ENCODE measurements at regions of chr3 and their contacts with region 1.

Region 1: DNA sequence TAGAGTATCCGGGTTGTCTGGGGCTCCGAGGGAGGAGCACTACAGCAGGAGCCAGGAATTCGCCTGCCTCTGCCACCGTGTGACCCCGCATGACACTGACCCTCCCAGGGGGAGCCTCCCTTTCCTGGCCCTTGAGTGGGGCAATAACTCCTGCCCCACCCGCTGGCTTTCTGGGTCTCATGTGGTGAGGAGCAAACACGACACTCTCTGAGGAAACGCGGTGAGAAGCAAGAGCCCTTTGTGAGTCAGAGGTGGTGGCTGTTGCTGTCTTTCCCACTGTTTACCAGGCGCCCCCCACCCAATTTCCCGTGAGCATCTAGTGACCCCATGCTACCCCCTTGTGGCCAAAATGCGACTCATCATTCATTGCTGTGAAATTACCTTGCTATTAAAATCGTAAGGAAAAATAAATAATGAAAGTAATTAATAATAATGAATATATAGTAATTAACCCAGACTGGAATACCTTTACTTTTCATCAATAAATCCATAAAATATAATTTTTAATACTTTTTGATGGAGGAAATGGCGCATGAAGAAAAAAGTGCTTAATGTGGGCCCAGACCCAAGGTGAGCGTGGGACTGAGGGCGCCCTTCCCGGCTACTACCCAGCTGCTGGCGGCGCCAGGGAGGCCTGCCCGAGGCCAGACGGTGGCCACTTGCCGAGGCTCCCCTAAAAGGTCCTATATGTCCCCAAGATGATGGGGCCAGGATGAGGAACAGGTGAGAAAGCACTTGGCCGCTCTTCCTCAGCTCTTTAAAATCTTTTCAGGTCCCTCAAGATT is 29.3 kb downstream of the CCNL1 start:
- DNase-seq: peak; percentile 44 to 73 (median 66)
- ATAC-seq: peak; percentile 45
- H3K4me3 ChIP-seq: no peak overlapping the region
- H3K27ac ChIP-seq: peak overlapping the region; percentile 48; the same call in 2 of the 3 replicates
- H3K4me1 ChIP-seq: peaks cover 29 to 67% of the 10 kb centered on the region in 2 experiments
- H3K27me3 ChIP-seq: no peaks in the 10 kb centered on the region
- CTCF ChIP-seq: peak; percentile 68 to 81 (median 81)
- EP300 ChIP-seq: no peak
- POLR2A ChIP-seq: no peak
- RAD21 ChIP-seq: peak; percentile 86 to 91

Region 2: DNA sequence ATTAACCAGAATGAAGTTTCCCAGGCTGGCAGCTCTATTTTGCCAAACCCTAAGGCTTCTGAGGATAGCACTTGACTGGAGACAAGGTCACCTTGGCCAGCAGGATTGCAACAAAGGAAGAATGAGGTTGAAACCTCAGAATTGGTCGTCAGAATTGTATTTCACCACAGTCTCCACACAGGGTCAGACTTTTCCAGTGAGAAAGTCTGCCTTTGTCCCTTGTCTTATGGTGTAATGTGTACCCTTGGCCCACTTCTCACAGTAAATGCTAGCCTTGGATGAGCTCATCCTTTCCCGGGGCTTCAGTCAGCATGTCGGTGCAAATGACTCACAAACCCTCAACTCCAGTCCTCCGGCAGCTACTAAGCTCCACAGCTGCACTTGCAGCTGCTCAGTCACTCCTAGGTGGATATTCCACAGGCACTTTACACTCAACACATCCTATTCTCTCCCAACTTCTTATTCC is 595.5 kb before region 1 on chr3:
- CTCF ChIA-PET with region 1: interaction called, 4 read pairs
- POLR2A ChIA-PET with region 1: no interaction called
- in situ Hi-C with region 1: loop called (anchors 25 kb)
- intact Hi-C with region 1: loop called (anchors 5 kb)
- DNase-seq: peak in 2 of 4 experiments; percentile 44 to 65
- ATAC-seq: peak; percentile 87
- H3K4me3 ChIP-seq: no peak overlapping the region
- H3K27ac ChIP-seq: no peak overlapping the region
- H3K4me1 ChIP-seq: no peaks in the 10 kb centered on the region; a peak in 1 of 5 replicates
- H3K27me3 ChIP-seq: no peaks in the 10 kb centered on the region
- CTCF ChIP-seq: peak; percentile 22 to 48 (median 42); a peak in 4 of 6 replicates
- EP300 ChIP-seq: no peak
- POLR2A ChIP-seq: no peak
- RAD21 ChIP-seq: peak; percentile 13 to 74; a peak in 2 of 4 replicates

Region 3: DNA sequence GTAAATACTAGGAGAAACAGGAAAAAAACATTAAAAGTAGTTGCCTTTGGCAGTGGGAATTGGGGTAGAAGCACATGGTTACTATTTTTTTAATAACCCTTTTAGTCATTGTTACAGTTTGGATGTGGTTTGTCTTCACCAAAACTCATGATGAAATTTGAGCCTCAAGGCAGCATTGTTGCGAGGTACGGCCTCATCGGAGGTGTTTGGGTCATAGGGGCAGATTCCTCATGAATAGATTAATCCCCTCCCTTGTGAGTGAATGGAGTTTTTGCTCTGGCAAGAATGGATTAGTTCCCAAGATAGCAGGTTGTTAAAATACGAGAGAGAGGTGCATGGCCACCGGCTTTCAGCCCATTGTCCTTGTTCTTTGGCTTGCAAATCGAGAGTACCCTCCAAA is 211.9 kb before region 1 on chr3:
- CTCF ChIA-PET with region 1: no interaction called
- POLR2A ChIA-PET with region 1: no interaction called
- in situ Hi-C with region 1: no loop called
- intact Hi-C with region 1: loop called (anchors 10 kb)
- DNase-seq: no peak
- ATAC-seq: no peak
- H3K4me3 ChIP-seq: no peak overlapping the region
- H3K27ac ChIP-seq: no peak overlapping the region
- H3K4me1 ChIP-seq: no peaks in the 10 kb centered on the region
- H3K27me3 ChIP-seq: no peaks in the 10 kb centered on the region
- CTCF ChIP-seq: no peak
- EP300 ChIP-seq: no peak
- POLR2A ChIP-seq: no peak
- RAD21 ChIP-seq: no peak

Region 4: GRCh38 chr3:156943430-156943829 is 187.2 kb before region 1 on chr3:
- CTCF ChIA-PET with region 1: no interaction called
- POLR2A ChIA-PET with region 1: no interaction called
- in situ Hi-C with region 1: no loop called
- intact Hi-C with region 1: no loop called
- DNase-seq: no peak
- ATAC-seq: no peak
- H3K4me3 ChIP-seq: no peak overlapping the region
- H3K27ac ChIP-seq: no peak overlapping the region
- H3K4me1 ChIP-seq: no peaks in the 10 kb centered on the region
- H3K27me3 ChIP-seq: no peaks in the 10 kb centered on the region
- CTCF ChIP-seq: no peak
- EP300 ChIP-seq: no peak
- POLR2A ChIP-seq: no peak
- RAD21 ChIP-seq: no peak

Region 5: DNA sequence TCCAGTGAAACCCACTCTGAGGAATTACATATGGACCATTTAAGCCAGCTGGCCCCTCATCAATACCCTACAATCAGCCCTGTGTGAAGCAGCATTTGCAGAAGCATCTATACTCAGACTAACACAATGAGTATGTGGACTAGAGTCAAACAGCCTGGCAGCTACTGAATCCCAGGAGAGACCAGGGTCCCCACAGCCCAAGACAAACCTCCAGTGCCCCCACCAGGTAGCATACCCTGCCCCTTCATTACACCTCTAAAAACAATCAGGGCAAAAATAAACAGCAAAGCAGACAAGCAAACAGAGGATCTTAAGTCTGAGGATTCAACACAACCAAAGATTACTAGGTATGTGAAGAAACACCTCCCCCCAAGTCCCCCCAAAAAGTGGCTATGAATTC is 147.1 kb before region 1 on chr3:
- CTCF ChIA-PET with region 1: no interaction called
- POLR2A ChIA-PET with region 1: no interaction called
- in situ Hi-C with region 1: no loop called
- intact Hi-C with region 1: loop called (anchors 10 kb)
- DNase-seq: no peak
- ATAC-seq: no peak
- H3K4me3 ChIP-seq: no peak overlapping the region
- H3K27ac ChIP-seq: no peak overlapping the region
- H3K4me1 ChIP-seq: no peaks in the 10 kb centered on the region; a peak in 1 of 5 replicates
- H3K27me3 ChIP-seq: no peaks in the 10 kb centered on the region
- CTCF ChIP-seq: no peak
- EP300 ChIP-seq: no peak
- POLR2A ChIP-seq: no peak
- RAD21 ChIP-seq: no peak

Region 6: GRCh38 chr3:157088601-157089454 is 41.8 kb before region 1 on chr3:
- CTCF ChIA-PET with region 1: no interaction called
- POLR2A ChIA-PET with region 1: interaction called, 9 read pairs
- in situ Hi-C with region 1: no loop called
- intact Hi-C with region 1: loop called (anchors 1 kb)
- DNase-seq: peak; percentile 94 to 99 (median 98)
- ATAC-seq: peak; percentile 92
- H3K4me3 ChIP-seq: peak overlapping the region; percentile 48
- H3K27ac ChIP-seq: peak overlapping the region; percentile 90
- H3K4me1 ChIP-seq: peaks cover 24 to 54% of the 10 kb centered on the region in 2 experiments
- H3K27me3 ChIP-seq: no peaks in the 10 kb centered on the region
- CTCF ChIP-seq: 0 out of 6 replicates have a peak, but pooled peaks of 1 of the 3 experiments have one; percentile 4
- EP300 ChIP-seq: peak; percentile 61
- POLR2A ChIP-seq: peak; percentile 78
- RAD21 ChIP-seq: peak in 1 of 2 experiments; percentile 4; a peak in 2 of 4 replicates

Region 7: DNA sequence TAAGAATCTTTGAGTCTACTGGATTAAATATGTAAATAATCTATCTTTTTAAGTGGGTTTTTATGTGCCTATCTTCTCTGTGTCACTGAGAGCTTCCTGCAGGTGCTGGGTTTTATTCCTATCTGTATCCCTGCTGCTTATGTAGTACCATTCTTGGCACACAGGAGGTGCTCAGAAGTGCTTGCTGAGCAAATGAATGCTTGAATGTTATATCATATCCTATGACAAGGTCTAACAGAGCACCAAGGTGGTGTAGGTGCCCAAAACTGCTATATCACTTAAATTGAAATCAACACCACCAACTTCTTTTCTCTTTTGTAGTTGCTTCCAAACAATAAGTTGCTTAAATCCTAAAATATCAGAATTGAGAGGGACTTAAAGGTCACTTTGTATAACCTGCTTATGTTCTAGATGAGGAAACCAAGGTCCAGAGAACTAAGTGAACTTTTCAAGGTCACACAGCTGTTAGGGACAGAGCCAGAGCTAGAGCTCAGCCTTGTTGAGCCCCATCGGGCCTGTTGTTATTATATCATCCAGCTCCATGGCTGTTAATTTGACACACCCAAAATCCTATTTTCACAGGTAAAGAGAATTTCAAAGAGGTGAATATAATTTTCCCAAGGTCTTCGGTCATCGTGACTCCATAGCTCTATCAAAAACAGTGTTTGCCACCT is 16.7 kb before region 1 on chr3:
- CTCF ChIA-PET with region 1: no interaction called
- POLR2A ChIA-PET with region 1: interaction called, 23 read pairs
- in situ Hi-C with region 1: no loop called
- intact Hi-C with region 1: loop called (anchors 2 kb)
- DNase-seq: peak in 3 of 4 experiments; percentile 32 to 66 (median 49)
- ATAC-seq: peak; percentile 58
- H3K4me3 ChIP-seq: no peak overlapping the region
- H3K27ac ChIP-seq: peak overlapping the region; percentile 27; the same call in 2 of the 3 replicates
- H3K4me1 ChIP-seq: peaks cover 41 to 87% of the 10 kb centered on the region in 2 experiments; a peak in 4 of 5 replicates
- H3K27me3 ChIP-seq: no peaks in the 10 kb centered on the region
- CTCF ChIP-seq: peak; percentile 47 to 55 (median 50); a peak in 5 of 6 replicates
- EP300 ChIP-seq: no peak
- POLR2A ChIP-seq: no peak
- RAD21 ChIP-seq: peak; percentile 40 to 56

Region 8: DNA sequence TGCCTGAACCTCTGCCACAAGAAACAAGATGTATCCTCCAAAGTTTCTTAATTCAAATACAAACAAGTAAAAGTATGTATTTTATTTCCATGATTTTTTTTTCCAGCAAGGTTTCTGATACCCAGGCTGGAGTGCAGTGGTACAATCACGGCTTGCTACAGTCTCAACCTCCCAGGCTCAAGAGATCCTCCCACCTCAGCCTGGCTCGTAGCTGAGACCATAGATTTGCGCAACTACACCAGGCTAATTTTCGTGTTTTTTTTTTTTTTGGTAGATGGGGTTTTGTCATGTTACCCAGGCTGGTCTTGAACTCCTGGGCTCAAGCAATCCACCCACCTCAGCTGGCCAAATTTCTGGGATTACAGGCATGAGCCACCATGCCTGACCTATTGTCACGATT is 384.7 kb after region 1 on chr3:
- CTCF ChIA-PET with region 1: no interaction called
- POLR2A ChIA-PET with region 1: no interaction called
- in situ Hi-C with region 1: no loop called
- intact Hi-C with region 1: no loop called
- DNase-seq: no peak
- ATAC-seq: no peak
- H3K4me3 ChIP-seq: no peak overlapping the region
- H3K27ac ChIP-seq: no peak overlapping the region
- H3K4me1 ChIP-seq: peaks cover 0 to 3% of the 10 kb centered on the region in 2 experiments; a peak in 3 of 5 replicates
- H3K27me3 ChIP-seq: no peaks in the 10 kb centered on the region
- CTCF ChIP-seq: no peak
- EP300 ChIP-seq: no peak
- POLR2A ChIP-seq: no peak
- RAD21 ChIP-seq: no peak